AG04450 (cell line): ENCODE measurements at regions of chr12 and their contacts with region 1.

Region 1: GRCh38 chr12:107402041-107403022 is 283.3 kb upstream of the PWP1 start:
- DNase-seq: no peak
- H3K4me3 ChIP-seq: no peak overlapping the region
- H3K27ac ChIP-seq: no peak overlapping the region
- H3K27me3 ChIP-seq: no peaks in the 10 kb centered on the region
- CTCF ChIP-seq: peak; percentile 82

Region 2: DNA sequence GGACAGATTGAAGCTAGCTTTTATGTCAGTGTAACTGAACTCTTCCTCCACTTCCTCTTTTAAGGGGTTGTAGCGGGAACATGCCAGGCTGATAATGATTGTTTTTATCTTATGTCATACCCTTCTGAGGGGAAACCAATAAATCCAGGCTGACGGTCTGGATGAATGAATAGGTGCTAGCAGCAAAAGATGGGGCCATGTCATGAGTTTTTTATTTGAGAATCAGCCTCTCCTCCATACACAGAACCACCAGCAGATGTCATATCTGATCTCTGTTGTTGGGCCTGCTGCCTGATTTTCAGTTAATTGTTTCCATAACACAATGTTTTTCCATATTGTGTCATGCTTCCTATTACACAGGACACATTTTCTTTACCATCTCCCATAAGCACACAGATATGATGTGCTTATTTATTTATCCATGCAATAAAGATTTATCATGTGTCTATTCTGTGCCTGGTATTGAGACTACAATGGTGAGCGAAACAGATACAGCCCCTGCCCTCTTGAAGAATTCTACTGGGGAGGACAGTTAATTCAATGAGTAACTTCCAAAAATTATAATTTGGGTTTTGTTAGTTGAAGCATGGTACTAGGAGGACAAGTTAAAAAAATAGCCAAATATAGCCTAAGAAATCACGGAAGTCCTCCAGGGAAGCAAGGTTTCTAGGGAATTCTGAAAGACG is 275.4 kb before region 1 on chr12:
- CTCF ChIA-PET with region 1: interaction called, 149 read pairs
- POLR2A ChIA-PET with region 1: no interaction called
- DNase-seq: no peak
- H3K4me3 ChIP-seq: no peak overlapping the region
- H3K27ac ChIP-seq: no peak overlapping the region
- H3K27me3 ChIP-seq: peaks cover 5% of the 10 kb centered on the region
- CTCF ChIP-seq: peak; percentile 61

Region 3: GRCh38 chr12:107597695-107598410 is 195.5 kb after region 1 on chr12:
- CTCF ChIA-PET with region 1: no interaction called
- POLR2A ChIA-PET with region 1: no interaction called
- DNase-seq: no peak
- H3K4me3 ChIP-seq: no peak overlapping the region
- H3K27ac ChIP-seq: no peak overlapping the region
- H3K27me3 ChIP-seq: no peaks in the 10 kb centered on the region
- CTCF ChIP-seq: no peak